CD4-positive, alpha-beta T cell (primary cell): ENCODE measurements at regions of chr17 and their contacts with region 1.

Region 1: GRCh38 chr17:30344283-30345088 is 10.6 kb upstream of the TMIGD1 start:
- DNase-seq: no peak
- ATAC-seq: no peak
- H3K4me3 ChIP-seq: no peak overlapping the region
- H3K4me3 Mint-ChIP-seq: no peak overlapping the region
- H3K27ac ChIP-seq: no peak overlapping the region
- H3K27ac Mint-ChIP-seq: no peak overlapping the region
- H3K4me1 ChIP-seq: peaks cover 7% of the 10 kb centered on the region
- H3K4me1 Mint-ChIP-seq: peaks cover 7% of the 10 kb centered on the region
- H3K27me3 ChIP-seq: no peaks in the 10 kb centered on the region
- H3K27me3 Mint-ChIP-seq: no peaks in the 10 kb centered on the region
- CTCF ChIP-seq: no peak

Region 2: GRCh38 chr17:30429155-30429554 is 84.7 kb after region 1 on chr17:
- CTCF ChIA-PET with region 1: no interaction called
- POLR2A ChIA-PET with region 1: no interaction called
- intact Hi-C with region 1: loop called in 1 of 2 experiments (anchors 5 kb)
- DNase-seq: no peak
- ATAC-seq: no peak
- H3K4me3 ChIP-seq: no peak overlapping the region
- H3K4me3 Mint-ChIP-seq: no peak overlapping the region
- H3K27ac ChIP-seq: no peak overlapping the region
- H3K27ac Mint-ChIP-seq: no peak overlapping the region
- H3K4me1 ChIP-seq: no peaks in the 10 kb centered on the region
- H3K4me1 Mint-ChIP-seq: no peaks in the 10 kb centered on the region
- H3K27me3 ChIP-seq: no peaks in the 10 kb centered on the region
- H3K27me3 Mint-ChIP-seq: no peaks in the 10 kb centered on the region
- CTCF ChIP-seq: no peak

Region 3: GRCh38 chr17:30590081-30590733 is 245.7 kb after region 1 on chr17:
- CTCF ChIA-PET with region 1: no interaction called
- POLR2A ChIA-PET with region 1: no interaction called
- intact Hi-C with region 1: no loop called
- DNase-seq: no peak
- ATAC-seq: no peak
- H3K4me3 ChIP-seq: no peak overlapping the region
- H3K4me3 Mint-ChIP-seq: no peak overlapping the region
- H3K27ac ChIP-seq: no peak overlapping the region
- H3K27ac Mint-ChIP-seq: no peak overlapping the region
- H3K4me1 ChIP-seq: no peaks in the 10 kb centered on the region
- H3K4me1 Mint-ChIP-seq: no peaks in the 10 kb centered on the region
- H3K27me3 ChIP-seq: no peaks in the 10 kb centered on the region
- H3K27me3 Mint-ChIP-seq: no peaks in the 10 kb centered on the region
- CTCF ChIP-seq: no peak